ENCODE measurements at regions of chr7 and their contacts with region 1.

Region 1: DNA sequence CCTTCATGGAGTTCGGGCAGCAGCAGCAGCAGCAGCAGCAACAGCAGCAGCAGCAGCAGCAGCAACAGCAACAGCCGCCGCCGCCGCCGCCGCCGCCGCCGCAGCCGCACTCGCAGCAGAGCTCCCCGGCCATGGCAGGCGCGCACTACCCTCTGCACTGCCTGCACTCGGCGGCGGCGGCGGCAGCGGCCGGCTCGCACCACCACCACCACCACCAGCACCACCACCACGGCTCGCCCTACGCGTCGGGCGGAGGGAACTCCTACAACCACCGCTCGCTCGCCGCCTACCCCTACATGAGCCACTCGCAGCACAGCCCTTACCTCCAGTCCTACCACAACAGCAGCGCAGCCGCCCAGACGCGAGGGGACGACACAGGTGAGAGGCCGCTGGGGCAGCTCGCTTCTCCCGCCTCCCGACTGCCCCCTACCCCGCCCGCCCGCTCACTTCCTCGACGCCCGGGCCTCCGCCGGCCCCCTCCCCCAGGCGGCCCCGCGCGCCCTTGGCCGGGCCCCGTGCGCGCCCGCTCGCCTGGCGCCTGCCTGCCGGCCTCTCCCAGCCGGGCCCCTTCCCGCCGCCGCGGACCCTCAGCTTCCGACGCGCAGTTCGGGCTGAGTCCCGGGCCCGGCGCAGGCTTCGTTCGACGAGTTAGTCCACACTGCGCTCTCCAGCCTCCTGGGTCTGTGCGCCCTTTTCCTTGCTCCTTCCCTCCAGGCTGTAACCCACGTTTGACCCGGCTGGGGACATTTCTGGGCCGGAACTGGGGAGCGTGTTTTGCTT is 873 bp downstream of the DLX6 start:
- DNase-seq: peak; percentile 72
- ATAC-seq: peak; percentile 85
- H3K4me3 ChIP-seq: peak overlapping the region; percentile 78 to 80 (median 79)
- H3K27ac ChIP-seq: peak overlapping the region; percentile 90
- H3K4me1 ChIP-seq: peaks cover 35% of the 10 kb centered on the region
- H3K27me3 ChIP-seq: no peaks in the 10 kb centered on the region; a peak in 1 of 5 replicates
- CTCF ChIP-seq: peak; percentile 47
- EP300 ChIP-seq: 0 out of 4 replicates have a peak, but pooled peaks of 1 of the 2 experiments have one; percentile 11
- POLR2A ChIP-seq: peak; percentile 71 to 77
- RAD21 ChIP-seq: no peak; the same call in 1 of the 2 replicates

Region 2: GRCh38 chr7:96303686-96304443 is 702.4 kb before region 1 on chr7:
- CTCF ChIA-PET with region 1: no interaction called
- POLR2A ChIA-PET with region 1: interaction called, 4 read pairs
- in situ Hi-C with region 1: loop called (anchors 25 kb)
- intact Hi-C with region 1: loop called (anchors 5 kb)
- DNase-seq: no peak
- ATAC-seq: peak; percentile 54
- H3K4me3 ChIP-seq: peak overlapping the region; percentile 9 to 54 (median 30); a peak in 5 of 6 replicates
- H3K27ac ChIP-seq: peak overlapping the region; percentile 77
- H3K4me1 ChIP-seq: peaks cover 97% of the 10 kb centered on the region
- H3K27me3 ChIP-seq: no peaks in the 10 kb centered on the region
- CTCF ChIP-seq: no peak
- EP300 ChIP-seq: no peak
- POLR2A ChIP-seq: no peak
- RAD21 ChIP-seq: no peak

Region 3: DNA sequence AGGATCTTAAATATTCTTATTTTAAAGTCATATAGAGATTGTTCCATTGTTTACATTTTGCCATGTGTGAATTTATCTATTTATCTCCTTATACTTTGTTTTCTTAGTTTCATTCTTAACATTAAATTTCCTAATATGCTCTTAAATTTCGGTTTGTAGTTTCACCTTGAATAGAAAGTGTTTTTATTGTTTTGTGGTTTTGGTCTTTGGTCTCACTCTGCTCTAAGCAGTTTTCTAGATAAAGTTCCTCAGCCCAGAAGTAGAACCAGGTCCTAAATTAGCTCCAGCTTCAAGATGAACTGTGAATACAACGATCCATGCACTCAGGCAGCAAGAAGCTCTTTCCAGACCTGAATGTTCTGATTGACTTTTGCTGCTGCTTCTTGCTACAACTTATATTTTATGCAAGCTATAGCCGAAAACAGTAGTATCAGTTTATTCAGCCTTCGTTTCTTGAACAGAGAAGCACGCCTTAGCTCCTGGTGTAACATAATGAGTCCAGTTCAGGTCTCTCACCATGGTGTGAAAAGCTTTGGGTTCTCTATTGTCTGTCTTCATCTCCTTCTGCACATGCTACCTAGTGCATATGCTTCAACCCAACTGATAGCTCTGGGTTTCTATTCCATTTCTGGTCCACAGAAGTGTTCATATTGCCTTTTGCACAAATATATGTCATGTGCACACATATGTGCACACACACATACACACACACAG is 391.9 kb before region 1 on chr7:
- CTCF ChIA-PET with region 1: no interaction called
- POLR2A ChIA-PET with region 1: no interaction called
- in situ Hi-C with region 1: no loop called
- intact Hi-C with region 1: no loop called
- DNase-seq: no peak
- ATAC-seq: no peak
- H3K4me3 ChIP-seq: no peak overlapping the region
- H3K27ac ChIP-seq: no peak overlapping the region
- H3K4me1 ChIP-seq: no peaks in the 10 kb centered on the region
- H3K27me3 ChIP-seq: no peaks in the 10 kb centered on the region
- CTCF ChIP-seq: no peak
- EP300 ChIP-seq: no peak
- POLR2A ChIP-seq: no peak
- RAD21 ChIP-seq: no peak

Region 4: GRCh38 chr7:96800824-96801223 is 205.4 kb before region 1 on chr7:
- CTCF ChIA-PET with region 1: no interaction called
- POLR2A ChIA-PET with region 1: no interaction called
- in situ Hi-C with region 1: no loop called
- intact Hi-C with region 1: loop called (anchors 10 kb)
- DNase-seq: peak; percentile 81
- ATAC-seq: peak; percentile 93
- H3K4me3 ChIP-seq: no peak overlapping the region
- H3K27ac ChIP-seq: no peak overlapping the region
- H3K4me1 ChIP-seq: peaks cover 22% of the 10 kb centered on the region
- H3K27me3 ChIP-seq: 0 out of 5 replicates have a peak, but pooled peaks cover 0 to 2% of the 10 kb centered on the region in 2 experiments
- CTCF ChIP-seq: peak; percentile 56
- EP300 ChIP-seq: peak; percentile 62 to 74; a peak in 2 of 4 replicates
- POLR2A ChIP-seq: no peak
- RAD21 ChIP-seq: no peak

Region 5: GRCh38 chr7:96970739-96971138 is 35.5 kb before region 1 on chr7:
- CTCF ChIA-PET with region 1: no interaction called
- POLR2A ChIA-PET with region 1: interaction called, 10 read pairs
- in situ Hi-C with region 1: no loop called
- intact Hi-C with region 1: loop called (anchors 2 kb)
- DNase-seq: peak; percentile 96
- ATAC-seq: peak; percentile 98
- H3K4me3 ChIP-seq: peak overlapping the region in 1 of 3 experiments; percentile 17; a peak in 1 of 6 replicates
- H3K27ac ChIP-seq: peak overlapping the region; percentile 75
- H3K4me1 ChIP-seq: peaks cover 42% of the 10 kb centered on the region
- H3K27me3 ChIP-seq: no peaks in the 10 kb centered on the region
- CTCF ChIP-seq: no peak
- EP300 ChIP-seq: peak; percentile 75 to 95; a peak in 3 of 4 replicates
- POLR2A ChIP-seq: no peak
- RAD21 ChIP-seq: no peak

Region 6: DNA sequence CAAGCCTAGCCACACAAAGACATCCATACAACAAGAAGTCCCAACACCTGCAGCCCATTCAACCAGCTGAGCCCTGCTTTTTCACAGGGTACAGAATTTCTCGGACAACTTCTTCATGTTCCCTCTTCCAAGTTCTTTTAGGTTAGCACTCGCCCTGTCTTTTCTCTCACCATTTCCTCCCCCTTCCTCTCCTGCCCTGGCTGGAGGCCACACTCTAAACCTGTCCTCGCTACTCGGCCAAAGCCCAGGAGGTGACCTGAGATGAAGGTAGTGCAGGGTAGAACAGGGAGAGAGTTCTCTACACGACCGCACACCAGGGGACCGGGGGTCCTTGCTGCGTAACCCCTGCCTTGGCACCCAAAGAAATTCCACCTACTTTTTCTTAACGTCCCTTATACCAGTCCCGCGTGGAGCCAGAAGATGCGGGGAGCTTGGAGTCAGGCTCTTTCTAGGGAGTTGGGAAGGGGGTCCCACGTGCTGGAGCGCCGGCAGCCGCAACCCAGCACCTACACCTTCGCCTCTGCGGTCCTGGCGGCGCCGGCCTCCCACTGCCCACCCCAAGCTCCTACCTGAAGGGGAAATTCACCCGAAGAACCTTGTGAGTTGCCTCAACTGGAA is 16.9 kb before region 1 on chr7:
- CTCF ChIA-PET with region 1: no interaction called
- POLR2A ChIA-PET with region 1: interaction called, 14 read pairs
- in situ Hi-C with region 1: no loop called
- intact Hi-C with region 1: no loop called
- DNase-seq: no peak
- ATAC-seq: no peak
- H3K4me3 ChIP-seq: no peak overlapping the region
- H3K27ac ChIP-seq: no peak overlapping the region
- H3K4me1 ChIP-seq: no peaks in the 10 kb centered on the region
- H3K27me3 ChIP-seq: no peaks in the 10 kb centered on the region
- CTCF ChIP-seq: no peak
- EP300 ChIP-seq: no peak
- POLR2A ChIP-seq: no peak
- RAD21 ChIP-seq: no peak

Region 7: DNA sequence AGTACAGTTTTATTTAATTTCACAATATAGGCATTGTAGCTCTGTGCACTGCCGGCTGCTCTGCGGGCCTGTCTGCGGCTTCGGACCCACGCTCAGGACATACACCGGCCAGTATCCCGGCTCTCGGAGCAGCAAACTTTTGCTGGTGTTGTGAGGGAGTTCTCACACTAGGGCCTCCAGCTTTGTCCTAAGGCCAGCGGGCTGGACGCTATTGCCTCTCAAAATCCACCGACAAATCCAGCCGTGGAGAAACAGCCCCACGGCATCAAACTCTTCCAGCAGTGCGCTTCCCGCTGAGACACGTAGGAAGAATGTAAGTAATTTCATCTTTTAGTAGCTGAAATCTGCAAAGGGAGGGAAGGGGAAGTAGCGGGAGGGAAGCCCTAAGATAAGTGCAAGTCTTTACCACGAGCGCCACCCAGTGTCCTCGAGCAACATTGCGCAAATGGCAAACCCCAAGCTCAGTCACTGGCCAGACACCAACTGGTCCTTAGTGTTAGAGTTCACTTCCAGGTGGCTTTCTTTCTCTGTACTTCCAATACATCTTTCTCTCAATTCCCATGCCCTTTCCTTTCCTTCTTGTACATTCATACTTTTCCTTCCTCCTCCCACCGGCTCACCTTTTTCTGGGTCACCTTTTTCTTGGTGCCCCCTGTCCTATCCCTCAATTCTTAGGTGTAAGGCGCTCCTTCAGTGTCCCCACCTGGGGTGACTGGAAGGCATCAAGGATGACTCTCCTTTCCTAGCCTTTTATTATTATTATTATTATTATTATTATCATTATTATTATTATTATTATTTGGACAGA is 21.4 kb after region 1 on chr7:
- CTCF ChIA-PET with region 1: no interaction called
- POLR2A ChIA-PET with region 1: interaction called, 14 read pairs
- in situ Hi-C with region 1: no loop called
- intact Hi-C with region 1: no loop called
- DNase-seq: peak; percentile 70
- ATAC-seq: peak; percentile 86
- H3K4me3 ChIP-seq: peak overlapping the region; percentile 53 to 77 (median 68)
- H3K27ac ChIP-seq: no peak overlapping the region
- H3K4me1 ChIP-seq: peaks cover 24% of the 10 kb centered on the region
- H3K27me3 ChIP-seq: peaks cover 0 to 42% of the 10 kb centered on the region in 2 experiments; a peak in 4 of 5 replicates
- CTCF ChIP-seq: peak; percentile 96
- EP300 ChIP-seq: no peak
- POLR2A ChIP-seq: no peak
- RAD21 ChIP-seq: peak; percentile 93